CD4-positive, alpha-beta memory T cell (primary cell): ENCODE measurements at regions of chrX and their contacts with region 1.

Region 1: GRCh38 chrX:2707334-2707760 is 16.3 kb downstream of the CD99 start:
- DNase-seq: peak in 4 of 5 donors; percentile 22 to 82 (median 38)
- H3K4me3 ChIP-seq: no peak overlapping the region
- H3K4me3 Mint-ChIP-seq: peak overlapping the region in 7 of 8 donors; percentile 27 to 83 (median 61)
- H3K27ac ChIP-seq: peak overlapping the region; percentile 29
- H3K27ac Mint-ChIP-seq: peak overlapping the region; percentile 13 to 90 (median 85)
- H3K4me1 ChIP-seq: peaks cover 80% of the 10 kb centered on the region
- H3K4me1 Mint-ChIP-seq: peaks cover 61 to 89% (median 77%) of the 10 kb centered on the region in 4 donors
- H3K27me3 ChIP-seq: no peaks in the 10 kb centered on the region
- H3K27me3 Mint-ChIP-seq: no peaks in the 10 kb centered on the region

Region 2: GRCh38 chrX:2696698-2697215 is 10.6 kb before region 1 on chrX:
- CTCF ChIA-PET with region 1: no interaction called
- POLR2A ChIA-PET with region 1: no interaction called
- intact Hi-C with region 1: loop called (anchors 1 kb)
- DNase-seq: peak; percentile 64 to 89 (median 70)
- H3K4me3 ChIP-seq: peak overlapping the region in 1 of 2 donors; percentile 48
- H3K4me3 Mint-ChIP-seq: peak overlapping the region; percentile 41 to 98 (median 75)
- H3K27ac ChIP-seq: peak overlapping the region; percentile 60
- H3K27ac Mint-ChIP-seq: peak overlapping the region; percentile 86 to 94 (median 92)
- H3K4me1 ChIP-seq: peaks cover 91% of the 10 kb centered on the region
- H3K4me1 Mint-ChIP-seq: peaks cover 68 to 100% (median 84%) of the 10 kb centered on the region in 4 donors
- H3K27me3 ChIP-seq: no peaks in the 10 kb centered on the region
- H3K27me3 Mint-ChIP-seq: no peaks in the 10 kb centered on the region